ENCODE measurements at regions of chr11 and their contacts with region 1.

Region 1: GRCh38 chr11:129785383-129786111 is 30.1 kb upstream of the TMEM45B start:
- DNase-seq: peak; percentile 31
- H3K4me3 ChIP-seq: no peak overlapping the region
- H3K27ac ChIP-seq: no peak overlapping the region
- H3K4me1 ChIP-seq: peaks cover 18% of the 10 kb centered on the region
- H3K27me3 ChIP-seq: no peaks in the 10 kb centered on the region
- CTCF ChIP-seq: peak; percentile 32 to 62

Region 2: DNA sequence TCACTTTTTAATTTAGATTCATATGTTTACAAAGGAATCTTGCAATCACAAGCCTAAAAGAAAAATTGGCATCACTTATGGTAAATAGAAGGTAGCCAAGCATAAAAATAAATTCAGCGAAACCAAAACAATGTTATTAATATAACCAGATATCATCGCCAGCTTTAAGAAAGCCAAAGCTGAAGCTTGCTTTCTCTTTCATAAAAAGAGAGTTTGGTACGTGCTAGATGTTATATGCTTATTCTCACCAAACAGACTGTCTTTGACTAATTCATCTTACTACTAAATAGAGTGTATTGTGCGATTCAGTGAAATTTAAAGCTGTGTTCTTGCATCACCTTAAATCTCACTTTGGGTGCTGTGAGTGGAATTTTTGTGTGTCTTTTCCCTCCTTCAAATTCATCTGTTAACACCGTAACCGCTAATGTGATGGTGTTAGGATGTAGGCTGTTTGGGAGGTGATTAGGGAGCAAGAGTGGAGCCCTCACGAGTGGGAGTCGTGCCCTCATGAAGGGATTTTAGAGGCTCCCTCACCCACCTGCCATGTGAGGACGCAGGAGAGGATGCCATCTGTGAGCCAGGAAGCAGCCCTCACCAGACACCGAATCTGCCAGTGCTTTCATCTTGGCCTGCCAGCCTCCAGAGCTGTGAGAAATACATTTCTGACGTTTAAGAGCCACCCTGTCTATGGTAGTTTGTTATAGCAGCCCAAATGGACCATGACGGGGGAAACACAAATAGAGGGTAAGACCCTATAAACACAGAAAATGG is 104.0 kb before region 1 on chr11:
- CTCF ChIA-PET with region 1: no interaction called
- dilution Hi-C with region 1: no loop called
- in situ Hi-C with region 1: no loop called
- intact Hi-C with region 1: no loop called
- DNase-seq: no peak
- H3K4me3 ChIP-seq: no peak overlapping the region
- H3K27ac ChIP-seq: no peak overlapping the region
- H3K4me1 ChIP-seq: no peaks in the 10 kb centered on the region
- H3K27me3 ChIP-seq: no peaks in the 10 kb centered on the region
- CTCF ChIP-seq: no peak

Region 3: GRCh38 chr11:129828301-129828836 is 42.8 kb after region 1 on chr11:
- CTCF ChIA-PET with region 1: no interaction called
- dilution Hi-C with region 1: loop called (anchors 5 kb)
- in situ Hi-C with region 1: no loop called
- intact Hi-C with region 1: loop called (anchors 2 kb)
- DNase-seq: peak; percentile 81
- H3K4me3 ChIP-seq: peak overlapping the region in 1 of 3 experiments; percentile 13
- H3K27ac ChIP-seq: peak overlapping the region; percentile 95
- H3K4me1 ChIP-seq: peaks cover 48% of the 10 kb centered on the region
- H3K27me3 ChIP-seq: no peaks in the 10 kb centered on the region
- CTCF ChIP-seq: no peak

Region 4: DNA sequence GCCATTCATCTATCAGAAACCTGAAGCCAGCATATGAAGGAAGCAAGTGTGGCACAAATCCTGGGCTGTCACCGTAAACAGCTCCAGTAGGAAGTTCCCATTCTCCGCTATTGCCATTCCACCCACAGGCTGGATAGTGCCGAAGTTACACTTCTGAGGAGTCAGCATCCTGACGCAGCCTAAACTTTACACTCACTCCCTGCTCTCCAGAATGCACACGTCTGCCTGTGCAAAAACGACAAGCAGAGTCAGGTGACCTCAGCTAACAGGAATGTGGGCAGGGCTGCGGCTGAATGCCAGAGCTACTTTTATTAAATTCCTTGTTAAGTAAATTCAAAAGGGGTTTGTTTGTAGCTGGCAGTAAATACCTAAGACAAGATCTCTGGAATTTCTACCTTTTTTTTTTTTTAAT is 76.2 kb after region 1 on chr11:
- CTCF ChIA-PET with region 1: no interaction called
- dilution Hi-C with region 1: loop called (anchors 5 kb)
- in situ Hi-C with region 1: no loop called
- intact Hi-C with region 1: loop called (anchors 1 kb)
- DNase-seq: peak; percentile 95
- H3K4me3 ChIP-seq: no peak overlapping the region
- H3K27ac ChIP-seq: peak overlapping the region; percentile 73
- H3K4me1 ChIP-seq: peaks cover 17% of the 10 kb centered on the region
- H3K27me3 ChIP-seq: no peaks in the 10 kb centered on the region
- CTCF ChIP-seq: no peak

Region 5: DNA sequence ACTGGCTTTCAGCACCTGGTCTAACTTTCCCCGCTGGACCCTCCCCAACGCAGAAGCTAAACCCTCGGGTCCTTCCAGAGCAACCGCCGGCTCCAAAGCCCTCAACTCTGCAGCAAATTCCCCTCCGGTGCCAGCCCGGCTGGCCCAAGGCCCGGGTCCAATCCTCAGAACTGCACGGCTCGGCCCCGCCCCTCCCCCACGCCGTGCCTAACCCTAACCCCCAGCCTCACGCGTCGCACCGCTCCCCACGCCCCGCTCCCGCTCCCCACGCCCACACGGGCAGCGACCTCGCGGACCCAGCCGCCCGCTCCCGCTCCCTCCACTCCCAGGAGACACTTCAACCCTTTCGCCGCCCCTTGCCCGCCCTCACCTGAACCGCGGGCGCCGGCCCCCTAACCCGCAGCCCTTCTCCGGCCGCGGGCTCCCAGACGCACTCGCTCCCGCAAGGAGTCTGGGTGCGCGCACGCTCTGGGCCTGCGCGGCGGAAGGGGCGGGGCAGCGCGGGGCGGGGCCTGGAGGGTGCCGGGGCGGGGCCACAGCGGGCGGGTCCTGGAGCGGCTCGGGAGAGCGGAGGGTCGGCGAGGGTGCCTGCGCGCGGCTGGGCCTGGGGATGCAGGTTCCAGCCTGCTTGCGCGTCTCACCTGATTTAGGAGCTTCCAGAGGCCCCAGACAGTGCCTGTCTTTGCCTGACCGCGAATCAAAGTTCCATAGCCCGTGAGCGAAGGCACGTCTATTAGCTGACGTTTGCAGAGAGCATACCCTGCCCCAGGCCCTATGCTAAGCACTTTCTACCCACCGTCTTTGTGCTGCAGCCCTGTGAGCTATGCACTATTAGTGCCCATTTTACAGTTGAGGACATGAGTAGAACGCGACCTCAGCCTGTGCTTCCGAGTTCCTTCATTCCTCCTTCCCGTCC is 109.8 kb after region 1 on chr11 and contains the start of gene NFRKB:
- CTCF ChIA-PET with region 1: no interaction called
- dilution Hi-C with region 1: no loop called
- in situ Hi-C with region 1: loop called in 1 of 2 experiments (anchors 25 kb)
- intact Hi-C with region 1: loop called (anchors 1 kb)
- DNase-seq: peak; percentile 76
- H3K4me3 ChIP-seq: peak within 1 kb of the TSS; percentile 70 to 95 (median 90)
- H3K27ac ChIP-seq: peak within 1 kb of the TSS; percentile 45
- H3K4me1 ChIP-seq: peaks cover 15% of the 10 kb centered on the region
- H3K27me3 ChIP-seq: no peaks in the 10 kb centered on the region
- CTCF ChIP-seq: no peak
- total RNA-seq, gene NFRKB: 27.3 to 33.6 TPM

Region 6: DNA sequence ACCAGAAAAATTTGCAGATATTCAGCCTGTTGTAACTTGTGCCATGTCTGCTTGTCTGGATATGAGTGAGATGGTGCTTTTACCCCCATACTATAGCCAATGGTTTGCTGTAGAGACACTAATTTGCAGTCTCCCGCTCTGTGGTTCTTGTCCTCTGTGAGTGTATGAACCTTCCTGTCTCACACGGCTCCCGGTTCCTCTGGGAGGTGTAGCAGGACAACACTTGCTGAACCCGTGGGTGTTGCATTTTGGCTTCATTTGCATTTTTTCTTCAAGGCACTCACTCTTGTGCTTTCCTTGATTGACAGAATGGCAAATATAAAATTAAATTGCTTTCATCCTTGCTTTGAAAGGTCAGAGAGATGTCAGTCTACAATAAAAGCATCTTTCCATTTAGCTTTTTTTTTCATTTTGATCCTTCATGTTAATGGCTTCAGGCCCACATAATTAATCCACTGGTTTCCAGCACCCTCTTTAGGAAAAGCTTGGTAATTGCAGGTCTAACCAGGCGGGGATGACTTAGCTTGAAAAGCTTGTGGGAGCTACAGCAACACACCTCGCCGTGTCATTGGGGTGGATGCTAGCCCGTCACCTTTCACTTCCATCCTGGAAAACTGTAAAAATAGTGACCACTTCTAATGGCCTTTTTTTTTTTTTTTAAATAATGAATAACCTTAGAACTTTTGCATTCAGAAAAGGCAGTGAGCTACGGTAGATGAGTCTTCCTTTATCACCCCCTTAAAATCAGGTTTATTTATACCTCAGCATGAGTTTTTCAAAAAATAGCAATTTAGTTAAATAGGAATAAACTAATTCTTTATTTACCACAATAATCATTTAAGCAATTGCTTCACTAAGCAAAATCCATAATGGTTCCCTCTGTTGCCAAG is 346.7 kb after region 1 on chr11:
- CTCF ChIA-PET with region 1: no interaction called
- dilution Hi-C with region 1: no loop called
- in situ Hi-C with region 1: loop called (anchors 10 to 25 kb)
- intact Hi-C with region 1: loop called (anchors 1 kb)
- DNase-seq: peak; percentile 65
- H3K4me3 ChIP-seq: no peak overlapping the region
- H3K27ac ChIP-seq: no peak overlapping the region
- H3K4me1 ChIP-seq: peaks cover 4% of the 10 kb centered on the region
- H3K27me3 ChIP-seq: no peaks in the 10 kb centered on the region
- CTCF ChIP-seq: peak; percentile 88 to 92

Region 7: GRCh38 chr11:130413405-130414106 is 628.0 kb after region 1 on chr11:
- CTCF ChIA-PET with region 1: no interaction called
- dilution Hi-C with region 1: no loop called
- in situ Hi-C with region 1: loop called in 1 of 2 experiments (anchors 25 kb)
- intact Hi-C with region 1: loop called (anchors 10 kb)
- DNase-seq: peak; percentile 94
- H3K4me3 ChIP-seq: no peak overlapping the region
- H3K27ac ChIP-seq: peak overlapping the region; percentile 57
- H3K4me1 ChIP-seq: peaks cover 20% of the 10 kb centered on the region
- H3K27me3 ChIP-seq: no peaks in the 10 kb centered on the region
- CTCF ChIP-seq: no peak